ENCODE measurements at regions of chr5 and their contacts with region 1.

Region 1: DNA sequence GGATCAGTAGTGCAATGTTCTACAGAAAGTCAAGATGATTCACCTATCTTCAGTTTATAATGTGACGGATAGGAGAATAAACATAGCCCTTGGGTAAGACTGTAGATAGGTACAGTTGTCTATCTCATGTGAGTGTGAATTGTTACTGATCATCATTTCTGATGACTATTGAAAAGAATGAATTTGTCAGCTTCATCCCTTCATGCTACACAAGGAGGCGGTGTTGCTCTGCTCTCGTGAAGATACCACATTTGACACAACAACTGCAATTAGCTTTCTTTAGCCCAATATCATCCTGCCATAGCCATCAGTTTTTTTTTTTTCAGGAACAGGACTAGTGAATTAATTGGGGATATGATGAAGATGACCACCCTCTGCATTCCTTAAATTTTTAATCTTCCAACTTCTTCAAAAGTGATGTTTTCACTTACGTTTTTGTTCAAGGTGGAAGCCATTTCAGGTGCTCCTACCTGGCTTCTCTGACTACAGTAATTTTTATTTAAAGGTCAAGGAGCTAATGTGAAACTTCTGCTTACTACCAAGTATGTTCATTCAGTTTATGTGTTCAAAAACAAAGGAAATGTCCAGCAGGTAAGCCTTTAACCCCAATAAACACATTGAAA is 152.9 kb upstream of the MOCS2 start:
- DNase-seq: peak; percentile 65
- H3K4me3 Mint-ChIP-seq: no peak overlapping the region
- H3K27ac Mint-ChIP-seq: no peak overlapping the region
- H3K4me1 Mint-ChIP-seq: peaks cover 21% of the 10 kb centered on the region
- H3K27me3 Mint-ChIP-seq: no peaks in the 10 kb centered on the region
- CTCF ChIP-seq: peak; percentile 61

Region 2: GRCh38 chr5:53249529-53250200 is 12.8 kb before region 1 on chr5:
- CTCF ChIA-PET with region 1: interaction called, 10 read pairs
- POLR2A ChIA-PET with region 1: interaction called, 6 read pairs
- intact Hi-C with region 1: no loop called
- DNase-seq: peak; percentile 65
- H3K4me3 Mint-ChIP-seq: no peak overlapping the region
- H3K27ac Mint-ChIP-seq: peak overlapping the region; percentile 41
- H3K4me1 Mint-ChIP-seq: peaks cover 38% of the 10 kb centered on the region
- H3K27me3 Mint-ChIP-seq: no peaks in the 10 kb centered on the region
- CTCF ChIP-seq: no peak

Region 3: DNA sequence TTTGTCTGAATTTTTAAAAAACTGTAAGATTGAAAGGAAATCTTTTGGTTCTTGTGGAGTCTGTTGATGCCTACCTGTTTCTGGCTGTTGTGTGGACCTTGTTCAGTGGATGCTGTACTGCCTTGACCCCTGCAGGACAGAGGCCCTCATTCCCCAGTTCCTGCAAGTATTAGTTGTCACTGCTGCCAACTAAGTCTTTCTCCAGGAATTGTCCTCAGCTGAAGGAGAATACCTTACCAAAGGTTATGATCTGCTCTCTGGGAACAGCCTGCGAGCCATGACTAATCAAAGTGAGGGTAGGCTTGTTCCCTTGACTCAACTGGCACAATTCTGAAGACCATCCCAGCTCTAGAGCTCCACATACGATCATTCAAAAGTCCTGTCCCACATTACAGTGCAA is 72.7 kb after region 1 on chr5:
- CTCF ChIA-PET with region 1: interaction called, 4 read pairs
- POLR2A ChIA-PET with region 1: no interaction called
- intact Hi-C with region 1: loop called (anchors 1 kb)
- DNase-seq: peak; percentile 49
- H3K4me3 Mint-ChIP-seq: no peak overlapping the region
- H3K27ac Mint-ChIP-seq: no peak overlapping the region
- H3K4me1 Mint-ChIP-seq: peaks cover 34% of the 10 kb centered on the region
- H3K27me3 Mint-ChIP-seq: no peaks in the 10 kb centered on the region
- CTCF ChIP-seq: peak; percentile 15

Region 4: GRCh38 chr5:53442961-53443360 is 180.5 kb after region 1 on chr5:
- CTCF ChIA-PET with region 1: no interaction called
- POLR2A ChIA-PET with region 1: no interaction called
- intact Hi-C with region 1: no loop called
- DNase-seq: no peak
- H3K4me3 Mint-ChIP-seq: no peak overlapping the region
- H3K27ac Mint-ChIP-seq: no peak overlapping the region
- H3K4me1 Mint-ChIP-seq: peaks cover 9% of the 10 kb centered on the region
- H3K27me3 Mint-ChIP-seq: no peaks in the 10 kb centered on the region
- CTCF ChIP-seq: no peak

Region 5: GRCh38 chr5:53478411-53479044 is 216.1 kb after region 1 on chr5:
- CTCF ChIA-PET with region 1: interaction called, 6 read pairs
- POLR2A ChIA-PET with region 1: interaction called, 4 read pairs
- intact Hi-C with region 1: loop called (anchors 2 kb)
- DNase-seq: peak; percentile 69
- H3K4me3 Mint-ChIP-seq: peak overlapping the region; percentile 79
- H3K27ac Mint-ChIP-seq: no peak overlapping the region
- H3K4me1 Mint-ChIP-seq: peaks cover 23% of the 10 kb centered on the region
- H3K27me3 Mint-ChIP-seq: no peaks in the 10 kb centered on the region
- CTCF ChIP-seq: peak; percentile 60

Region 6: GRCh38 chr5:54217826-54218503 is 955.5 kb after region 1 on chr5:
- CTCF ChIA-PET with region 1: interaction called, 8 read pairs
- POLR2A ChIA-PET with region 1: interaction called, 3 read pairs
- intact Hi-C with region 1: loop called (anchors 1 kb)
- DNase-seq: peak; percentile 71
- H3K4me3 Mint-ChIP-seq: no peak overlapping the region
- H3K27ac Mint-ChIP-seq: no peak overlapping the region
- H3K4me1 Mint-ChIP-seq: no peaks in the 10 kb centered on the region
- H3K27me3 Mint-ChIP-seq: no peaks in the 10 kb centered on the region
- CTCF ChIP-seq: peak; percentile 56